ENCODE measurements at regions of chr19 and their contacts with region 1.

Region 1: DNA sequence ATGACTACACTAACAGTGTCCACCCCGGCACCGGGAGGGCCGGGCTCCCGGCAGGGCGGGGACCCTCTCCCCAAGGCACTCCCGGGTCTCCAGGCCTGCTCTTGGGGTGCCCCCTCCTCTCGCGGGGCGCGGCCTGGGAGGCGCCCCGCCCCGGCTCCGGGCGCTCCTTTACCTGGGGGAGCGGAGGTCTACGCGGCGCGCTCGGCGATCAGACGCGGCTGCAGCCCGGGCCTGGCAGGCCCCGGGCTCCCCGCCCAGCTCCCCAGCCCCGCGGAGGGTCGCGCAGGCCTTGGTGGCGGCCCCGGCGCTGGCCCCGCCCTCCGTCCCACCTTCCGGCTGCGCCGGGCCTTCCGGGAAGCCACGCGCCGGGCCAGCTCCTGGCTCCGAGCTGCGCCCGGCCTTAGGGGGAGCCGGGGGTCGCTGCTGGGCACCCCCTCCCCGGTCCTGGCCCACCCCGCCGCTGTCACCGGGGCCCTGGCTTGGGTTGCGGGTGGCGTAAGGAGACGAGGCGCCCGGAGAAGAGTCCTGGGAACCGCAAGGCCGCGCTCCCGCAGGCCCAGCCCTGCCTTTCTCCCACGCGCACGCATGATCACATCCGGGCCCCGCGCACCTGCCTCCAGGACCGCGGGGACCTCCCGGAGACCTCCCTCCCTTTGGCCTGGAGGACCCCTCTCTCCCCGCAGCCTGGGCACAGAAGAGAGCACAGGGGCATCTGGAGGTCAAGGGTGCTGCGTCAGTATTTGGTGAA is at the start of gene C19orf12:
- DNase-seq: peak; percentile 73
- ATAC-seq: peak; percentile 74
- H3K4me3 ChIP-seq: peak within 1 kb of the TSS; percentile 50 to 95 (median 79)
- H3K4me3 Mint-ChIP-seq: peak within 1 kb of the TSS; percentile 93
- H3K27ac ChIP-seq: peak within 1 kb of the TSS; percentile 86 to 95
- H3K27ac Mint-ChIP-seq: peak within 1 kb of the TSS; percentile 96
- H3K4me1 ChIP-seq: peaks cover 30 to 47% of the 10 kb centered on the region in 2 donors
- H3K4me1 Mint-ChIP-seq: peaks cover 49% of the 10 kb centered on the region
- H3K27me3 ChIP-seq: no peaks in the 10 kb centered on the region
- H3K27me3 Mint-ChIP-seq: no peaks in the 10 kb centered on the region
- CTCF ChIP-seq: no peak
- total RNA-seq, gene C19orf12: 25.7 and 29.4 TPM in 2 replicates

Region 2: GRCh38 chr19:27793644-27794493 is 1921.3 kb before region 1 on chr19:
- CTCF ChIA-PET with region 1: no interaction called
- POLR2A ChIA-PET with region 1: no interaction called
- intact Hi-C with region 1: loop called (anchors 5 kb)
- DNase-seq: peak; percentile 92
- ATAC-seq: peak; percentile 89
- H3K4me3 ChIP-seq: peak overlapping the region; percentile 73 to 98 (median 85)
- H3K4me3 Mint-ChIP-seq: peak overlapping the region; percentile 99
- H3K27ac ChIP-seq: peak overlapping the region; percentile 71 to 84
- H3K27ac Mint-ChIP-seq: peak overlapping the region; percentile 92
- H3K4me1 ChIP-seq: peaks cover 15 to 18% of the 10 kb centered on the region in 2 donors
- H3K4me1 Mint-ChIP-seq: peaks cover 30% of the 10 kb centered on the region
- H3K27me3 ChIP-seq: no peaks in the 10 kb centered on the region
- H3K27me3 Mint-ChIP-seq: no peaks in the 10 kb centered on the region
- CTCF ChIP-seq: no peak

Region 3: DNA sequence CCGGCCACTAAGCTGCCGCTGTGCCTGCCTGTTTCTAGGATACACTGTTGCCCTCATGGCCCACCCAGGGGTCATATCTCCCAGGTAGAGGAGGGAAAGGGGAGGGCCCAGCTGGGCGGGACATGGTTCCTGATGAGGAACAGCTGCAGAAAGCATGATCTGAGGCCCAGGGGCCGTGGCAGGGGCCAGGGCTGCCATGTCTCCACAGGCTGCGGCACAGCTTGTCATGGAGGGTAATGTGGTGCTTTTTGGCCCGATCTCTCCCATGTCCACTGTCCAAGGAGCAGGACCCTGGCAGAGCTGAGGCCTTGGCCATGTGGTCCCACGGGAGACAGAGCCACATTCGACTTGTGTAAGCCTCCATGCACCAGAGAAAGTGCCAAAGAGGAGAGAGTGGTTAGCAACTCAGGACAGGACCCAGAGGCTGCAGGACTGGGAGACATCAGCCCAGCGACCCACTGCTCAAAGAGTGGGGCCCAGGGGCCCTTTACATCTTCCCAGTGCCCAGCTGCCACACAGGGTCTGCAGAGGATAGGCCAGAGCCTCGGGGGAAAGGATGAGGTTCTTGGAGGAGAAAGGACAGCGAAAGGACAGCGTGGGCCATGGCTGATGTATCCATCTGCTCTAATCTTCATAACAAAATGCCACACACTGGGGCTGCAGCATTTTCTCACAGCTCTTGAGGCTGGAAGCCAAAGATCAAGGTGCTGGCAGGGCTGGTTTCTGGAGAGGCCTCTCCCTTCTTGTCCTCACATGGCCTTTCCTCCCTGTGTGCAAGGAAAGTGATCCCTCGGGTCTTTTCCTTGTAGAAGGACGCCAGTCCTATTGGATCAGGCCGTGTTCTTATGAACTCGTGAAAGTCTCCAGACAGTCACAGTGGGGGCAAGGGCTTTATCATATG is 97.5 kb before region 1 on chr19:
- CTCF ChIA-PET with region 1: interaction called, 273 read pairs
- POLR2A ChIA-PET with region 1: no interaction called
- intact Hi-C with region 1: no loop called
- DNase-seq: no peak
- ATAC-seq: no peak
- H3K4me3 ChIP-seq: no peak overlapping the region
- H3K4me3 Mint-ChIP-seq: no peak overlapping the region
- H3K27ac ChIP-seq: no peak overlapping the region
- H3K27ac Mint-ChIP-seq: no peak overlapping the region
- H3K4me1 ChIP-seq: peaks cover 3 to 24% of the 10 kb centered on the region in 2 donors
- H3K4me1 Mint-ChIP-seq: peaks cover 22% of the 10 kb centered on the region
- H3K27me3 ChIP-seq: peaks cover 0 to 12% (median 0%) of the 10 kb centered on the region in 4 experiments
- H3K27me3 Mint-ChIP-seq: peaks cover 15% of the 10 kb centered on the region
- CTCF ChIP-seq: no peak

Region 4: DNA sequence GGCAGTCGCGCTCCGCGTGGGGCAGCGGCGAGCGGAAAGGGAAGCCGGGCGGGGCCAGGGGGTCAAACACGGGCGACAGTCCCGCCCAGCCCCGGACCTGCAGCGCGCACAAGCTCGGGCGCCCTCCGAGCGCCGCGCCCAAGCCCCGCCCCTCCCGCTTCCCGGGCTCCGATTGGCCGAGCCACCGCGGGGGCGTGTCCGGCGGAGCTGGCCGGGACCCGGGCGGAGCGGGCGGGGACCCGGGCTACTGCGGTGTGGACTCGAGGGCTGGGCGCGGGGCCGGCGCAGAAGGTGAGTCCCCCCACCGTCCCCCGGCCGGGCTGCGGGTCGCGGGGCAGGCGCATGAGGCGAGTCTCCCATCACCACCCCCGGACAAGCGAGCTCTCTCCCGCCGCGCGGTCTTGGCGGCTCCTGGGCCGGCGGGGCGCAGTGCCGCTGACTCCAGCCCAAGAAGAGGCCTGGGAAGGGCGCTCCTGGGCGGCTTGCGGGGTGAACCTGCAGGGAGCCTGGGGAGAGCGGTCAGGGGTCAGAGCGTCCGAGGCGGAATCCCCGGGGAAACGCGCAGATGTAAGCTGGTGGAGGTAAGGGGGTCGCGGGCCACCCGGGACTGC is 49.8 kb before region 1 on chr19 and contains the start of gene PLEKHF1:
- CTCF ChIA-PET with region 1: interaction called, 75 read pairs
- POLR2A ChIA-PET with region 1: interaction called, 8 read pairs
- intact Hi-C with region 1: loop called (anchors 1 kb)
- DNase-seq: peak; percentile 87
- ATAC-seq: peak; percentile 97
- H3K4me3 ChIP-seq: peak within 1 kb of the TSS; percentile 18 to 87 (median 75)
- H3K4me3 Mint-ChIP-seq: peak within 1 kb of the TSS; percentile 87
- H3K27ac ChIP-seq: peak within 1 kb of the TSS; percentile 18 to 79
- H3K27ac Mint-ChIP-seq: peak within 1 kb of the TSS; percentile 80
- H3K4me1 ChIP-seq: peaks cover 31 to 42% of the 10 kb centered on the region in 2 donors
- H3K4me1 Mint-ChIP-seq: peaks cover 32% of the 10 kb centered on the region
- H3K27me3 ChIP-seq: no peaks in the 10 kb centered on the region
- H3K27me3 Mint-ChIP-seq: no peaks in the 10 kb centered on the region
- CTCF ChIP-seq: no peak
- total RNA-seq, gene PLEKHF1: 5.5 and 6.4 TPM in 2 replicates

Region 5: DNA sequence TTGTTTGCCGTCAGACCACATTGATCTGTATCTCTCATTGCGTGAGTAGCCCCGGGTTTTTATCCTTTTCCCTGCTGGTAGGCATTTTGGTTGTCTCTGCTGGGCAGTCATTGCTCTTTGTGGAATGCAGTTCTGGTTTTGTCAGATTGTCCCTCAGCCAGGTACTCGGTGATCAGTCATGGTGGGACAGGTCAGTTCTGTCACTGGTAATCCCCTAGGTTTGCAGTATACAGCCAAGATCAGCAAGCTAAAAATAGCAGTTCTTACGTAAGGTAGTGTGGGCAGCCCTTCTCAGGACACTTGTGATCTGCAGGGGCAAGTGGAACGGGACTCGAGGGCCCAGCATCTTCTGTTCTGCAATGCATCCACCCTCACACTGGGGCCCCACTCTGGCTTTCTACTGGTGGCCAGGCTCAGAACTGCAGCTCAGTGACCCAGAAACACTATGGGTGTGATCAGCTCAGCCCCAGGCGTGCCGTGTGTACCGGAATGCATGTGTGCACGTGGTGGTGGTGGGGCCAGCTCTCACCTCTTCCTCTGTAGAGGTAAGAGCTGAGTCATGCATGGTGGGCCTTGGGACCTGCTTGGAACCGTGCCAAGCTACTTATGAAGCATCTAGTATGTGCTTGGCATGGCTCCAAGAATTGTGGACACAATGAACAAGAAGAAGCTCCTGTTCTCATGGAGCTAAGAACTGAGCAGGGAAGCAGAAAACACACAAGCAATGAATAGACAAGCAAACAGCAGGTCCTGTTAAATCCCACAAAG is 43.5 kb before region 1 on chr19:
- CTCF ChIA-PET with region 1: interaction called, 52 read pairs
- POLR2A ChIA-PET with region 1: interaction called, 6 read pairs
- intact Hi-C with region 1: loop called (anchors 2 kb)
- DNase-seq: peak; percentile 82
- ATAC-seq: peak; percentile 77
- H3K4me3 ChIP-seq: peak overlapping the region in 1 of 5 experiments; percentile 1
- H3K4me3 Mint-ChIP-seq: peak overlapping the region; percentile 61
- H3K27ac ChIP-seq: peak overlapping the region; percentile 89 to 96
- H3K27ac Mint-ChIP-seq: peak overlapping the region; percentile 89
- H3K4me1 ChIP-seq: peaks cover 53 to 69% of the 10 kb centered on the region in 2 donors
- H3K4me1 Mint-ChIP-seq: peaks cover 62% of the 10 kb centered on the region
- H3K27me3 ChIP-seq: no peaks in the 10 kb centered on the region
- H3K27me3 Mint-ChIP-seq: no peaks in the 10 kb centered on the region
- CTCF ChIP-seq: peak; percentile 64

Region 6: GRCh38 chr19:29694669-29695627 is 20.2 kb before region 1 on chr19:
- CTCF ChIA-PET with region 1: interaction called, 50 read pairs
- POLR2A ChIA-PET with region 1: interaction called, 3 read pairs
- intact Hi-C with region 1: loop called (anchors 1 kb)
- DNase-seq: peak; percentile 81
- ATAC-seq: peak; percentile 97
- H3K4me3 ChIP-seq: no peak overlapping the region
- H3K4me3 Mint-ChIP-seq: no peak overlapping the region
- H3K27ac ChIP-seq: peak overlapping the region in 1 of 2 donors; percentile 49
- H3K27ac Mint-ChIP-seq: peak overlapping the region; percentile 62
- H3K4me1 ChIP-seq: peaks cover 21 to 23% of the 10 kb centered on the region in 2 donors
- H3K4me1 Mint-ChIP-seq: peaks cover 22% of the 10 kb centered on the region
- H3K27me3 ChIP-seq: no peaks in the 10 kb centered on the region
- H3K27me3 Mint-ChIP-seq: no peaks in the 10 kb centered on the region
- CTCF ChIP-seq: peak; percentile 90

Region 7: DNA sequence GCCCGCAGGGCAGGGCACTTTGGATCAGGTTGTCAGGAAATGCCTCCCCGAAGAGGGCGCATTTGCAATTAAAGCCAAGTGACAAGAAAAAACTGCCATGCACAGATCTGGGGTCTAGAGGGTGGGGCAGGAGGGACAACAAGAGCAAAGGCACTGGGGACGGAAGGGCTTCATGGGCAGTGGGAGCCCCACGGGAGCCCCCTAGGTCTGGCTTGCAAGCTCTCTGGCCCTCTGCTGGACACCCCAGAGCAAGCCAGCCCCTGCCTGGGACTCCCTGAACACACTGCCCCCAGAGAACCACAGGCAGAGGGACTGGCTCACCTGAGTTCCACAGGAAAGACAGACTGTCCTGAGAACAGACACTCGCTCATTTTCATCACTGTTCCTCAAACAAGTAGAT is 30.1 kb after region 1 on chr19:
- CTCF ChIA-PET with region 1: no interaction called
- POLR2A ChIA-PET with region 1: no interaction called
- intact Hi-C with region 1: no loop called
- DNase-seq: no peak
- ATAC-seq: peak; percentile 28
- H3K4me3 ChIP-seq: no peak overlapping the region
- H3K4me3 Mint-ChIP-seq: no peak overlapping the region
- H3K27ac ChIP-seq: no peak overlapping the region
- H3K27ac Mint-ChIP-seq: no peak overlapping the region
- H3K4me1 ChIP-seq: no peaks in the 10 kb centered on the region
- H3K4me1 Mint-ChIP-seq: no peaks in the 10 kb centered on the region
- H3K27me3 ChIP-seq: peaks cover 0 to 4% (median 0%) of the 10 kb centered on the region in 4 experiments
- H3K27me3 Mint-ChIP-seq: peaks cover 10% of the 10 kb centered on the region
- CTCF ChIP-seq: no peak

Region 8: DNA sequence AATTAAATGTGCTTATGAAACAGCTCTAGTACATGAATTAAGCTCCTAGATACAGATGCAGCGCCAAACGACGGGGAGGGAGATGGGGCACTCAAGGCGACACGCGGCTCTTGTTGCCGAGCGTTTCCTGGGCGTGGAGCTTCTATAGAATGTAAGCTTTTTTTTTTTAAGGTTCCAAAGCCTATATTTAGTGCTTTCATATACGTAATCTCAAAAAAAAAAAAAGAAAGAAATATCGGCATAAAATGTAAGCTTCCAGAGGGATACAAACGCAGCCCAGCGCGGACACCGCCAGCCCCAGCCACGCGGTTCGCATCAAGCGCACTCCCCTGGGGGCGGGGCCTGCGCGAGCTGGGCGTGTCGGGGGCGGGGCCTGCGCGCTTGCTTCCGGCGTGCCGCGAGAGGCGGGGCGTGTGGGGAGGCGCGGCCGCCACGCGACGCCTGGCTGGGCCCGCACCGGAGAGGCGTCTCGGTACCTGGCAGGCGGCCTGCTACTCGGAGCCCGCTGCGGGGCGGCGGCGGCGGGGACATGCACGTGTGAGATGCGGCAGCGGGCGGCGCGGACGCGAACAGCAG is 226.8 kb after region 1 on chr19 and contains the start of gene URI1:
- CTCF ChIA-PET with region 1: interaction called, 8 read pairs
- POLR2A ChIA-PET with region 1: no interaction called
- intact Hi-C with region 1: loop called (anchors 2 kb)
- DNase-seq: peak; percentile 92
- ATAC-seq: peak; percentile 92
- H3K4me3 ChIP-seq: peak within 1 kb of the TSS; percentile 59 to 96 (median 78)
- H3K4me3 Mint-ChIP-seq: peak within 1 kb of the TSS; percentile 97
- H3K27ac ChIP-seq: peak within 1 kb of the TSS; percentile 46 to 67
- H3K27ac Mint-ChIP-seq: peak within 1 kb of the TSS; percentile 94
- H3K4me1 ChIP-seq: peaks cover 19 to 30% of the 10 kb centered on the region in 2 donors
- H3K4me1 Mint-ChIP-seq: peaks cover 38% of the 10 kb centered on the region
- H3K27me3 ChIP-seq: peaks cover 0 to 3% (median 0%) of the 10 kb centered on the region in 4 experiments
- H3K27me3 Mint-ChIP-seq: peaks cover 9% of the 10 kb centered on the region
- CTCF ChIP-seq: no peak
- total RNA-seq, gene URI1: 54.2 and 58.0 TPM in 2 replicates

Measured in B cell (primary cell).